Lower leg skin (tissue), 4 donors: ENCODE measurements at regions of chr3 and their contacts with region 1.

Region 1: GRCh38 chr3:146326670-146327543 is 76.0 kb upstream of the PLSCR4 start:
- DNase-seq: no peak
- H3K4me3 ChIP-seq: no peak overlapping the region
- CTCF ChIP-seq: no peak
- POLR2A ChIP-seq: no peak

Region 2: GRCh38 chr3:146065573-146066006 is 261.3 kb before region 1 on chr3:
- intact Hi-C with region 1: loop called (anchors 10 kb)
- DNase-seq: no peak
- H3K4me3 ChIP-seq: no peak overlapping the region
- CTCF ChIP-seq: no peak
- POLR2A ChIP-seq: no peak

Region 3: DNA sequence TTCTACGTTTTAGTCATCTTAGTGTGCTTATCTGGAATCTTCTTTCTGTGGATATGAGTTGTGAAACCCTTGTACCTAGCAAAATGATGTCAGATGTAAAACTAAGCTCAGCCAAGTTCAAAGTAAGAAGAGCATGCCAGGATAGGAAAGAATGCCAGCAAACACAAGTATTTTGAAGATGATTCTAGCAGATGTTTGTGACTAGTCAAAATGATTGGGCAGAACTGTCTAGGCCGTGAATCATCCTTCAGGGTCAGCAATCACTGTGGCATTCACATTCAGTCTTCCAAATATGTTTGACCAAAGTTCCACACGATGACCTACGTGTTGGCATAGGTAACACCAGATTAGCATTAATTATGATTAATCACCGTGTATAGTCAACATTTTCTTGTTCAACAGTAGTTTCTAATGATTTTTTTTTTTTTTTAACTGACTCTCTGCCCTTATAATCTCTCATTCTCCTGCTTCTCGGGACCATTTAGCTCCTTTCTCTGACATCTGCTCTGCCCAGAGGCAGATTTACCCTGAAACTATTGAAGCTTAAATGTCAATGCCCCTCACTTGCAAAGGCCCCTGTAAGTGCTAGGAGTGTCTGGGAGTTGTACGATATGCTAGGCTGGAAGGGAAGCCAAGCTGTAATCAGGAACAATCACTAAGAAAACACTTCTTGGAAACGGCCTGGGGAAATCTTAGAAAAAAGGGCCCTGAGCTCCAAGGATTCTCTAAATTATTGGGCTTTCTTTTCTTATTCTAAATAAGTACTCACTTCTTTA is 160.3 kb before region 1 on chr3:
- intact Hi-C with region 1: no loop called
- DNase-seq: peak in 1 of 2 donors; percentile 42
- H3K4me3 ChIP-seq: no peak overlapping the region
- CTCF ChIP-seq: no peak
- POLR2A ChIP-seq: no peak

Region 4: GRCh38 chr3:146218880-146219866 is 107.7 kb before region 1 on chr3:
- intact Hi-C with region 1: loop called (anchors 5 kb)
- DNase-seq: no peak
- H3K4me3 ChIP-seq: no peak overlapping the region
- CTCF ChIP-seq: no peak
- POLR2A ChIP-seq: no peak

Region 5: GRCh38 chr3:147008886-147009285 is 682.0 kb after region 1 on chr3:
- intact Hi-C with region 1: no loop called
- DNase-seq: no peak
- H3K4me3 ChIP-seq: no peak overlapping the region
- CTCF ChIP-seq: no peak
- POLR2A ChIP-seq: no peak